ENCODE measurements at regions of chr12 and their contacts with region 1.

Region 1: GRCh38 chr12:27305673-27306456 is 26.8 kb upstream of the BMAL2 start:
- DNase-seq: no peak
- H3K4me3 ChIP-seq: no peak overlapping the region
- CTCF ChIP-seq: peak; percentile 2

Region 2: DNA sequence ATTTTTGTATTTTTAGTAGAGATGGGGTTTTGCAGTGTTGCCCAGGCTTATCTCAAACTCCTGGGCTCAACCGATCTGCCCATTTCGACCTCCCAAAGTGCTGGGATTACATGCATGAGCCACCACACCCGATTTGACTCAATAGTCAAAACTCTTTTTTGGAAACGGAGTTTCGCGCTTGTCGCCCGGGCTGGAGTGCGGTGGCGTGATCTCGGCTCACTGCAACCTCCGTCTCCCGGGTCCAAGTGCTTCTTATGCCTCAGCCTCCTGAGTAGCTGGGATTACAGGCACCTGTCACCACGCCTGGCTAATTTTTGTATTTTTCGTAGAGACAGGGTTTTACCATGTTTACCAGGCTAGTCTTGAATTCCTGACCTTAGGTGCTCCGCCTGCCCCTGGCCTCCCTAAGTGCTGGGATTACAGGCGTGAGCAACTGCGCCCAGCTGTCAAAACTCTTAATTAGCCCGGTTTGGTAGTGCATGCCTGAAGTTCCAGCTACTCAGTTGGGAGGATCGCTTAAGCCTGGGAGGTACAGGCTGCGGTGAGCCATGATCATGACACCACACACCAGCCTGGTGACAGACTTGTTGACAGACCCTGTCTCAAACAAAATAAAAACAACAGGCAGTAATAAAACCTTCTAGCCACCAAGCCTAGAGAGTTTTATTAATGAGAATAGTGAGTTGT is 271.1 kb before region 1 on chr12:
- CTCF ChIA-PET with region 1: interaction called, 68 read pairs
- POLR2A ChIA-PET with region 1: interaction called, 3 read pairs
- DNase-seq: no peak
- H3K4me3 ChIP-seq: no peak overlapping the region
- CTCF ChIP-seq: no peak

Region 3: GRCh38 chr12:27179400-27180214 is 126.3 kb before region 1 on chr12:
- CTCF ChIA-PET with region 1: interaction called, 10 read pairs
- POLR2A ChIA-PET with region 1: no interaction called
- DNase-seq: peak; percentile 97
- H3K4me3 ChIP-seq: no peak overlapping the region
- CTCF ChIP-seq: no peak

Region 4: DNA sequence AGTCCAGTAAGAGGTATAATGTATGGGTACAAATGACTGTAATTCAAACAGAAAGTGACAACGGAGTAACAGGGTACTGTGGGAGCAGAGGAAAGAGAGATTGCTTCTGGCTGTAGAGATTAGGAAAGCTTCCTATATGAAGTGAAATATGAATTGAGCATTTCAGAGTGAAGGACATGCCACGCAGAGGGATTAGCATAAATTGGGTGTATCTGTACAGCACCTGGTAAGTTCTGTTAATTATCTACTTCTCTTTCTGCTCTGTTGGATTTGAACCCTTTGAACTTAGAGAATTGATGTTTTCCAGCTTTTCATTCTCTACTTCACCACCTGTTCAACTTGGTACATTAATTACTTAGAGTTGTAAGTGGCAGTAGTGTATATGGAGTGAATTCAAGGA is 52.9 kb before region 1 on chr12:
- CTCF ChIA-PET with region 1: interaction called, 27 read pairs
- POLR2A ChIA-PET with region 1: no interaction called
- DNase-seq: no peak
- H3K4me3 ChIP-seq: no peak overlapping the region
- CTCF ChIP-seq: no peak

Region 5: GRCh38 chr12:27290501-27291168 is 15.2 kb before region 1 on chr12:
- CTCF ChIA-PET with region 1: interaction called, 45 read pairs
- POLR2A ChIA-PET with region 1: no interaction called
- DNase-seq: no peak
- H3K4me3 ChIP-seq: no peak overlapping the region
- CTCF ChIP-seq: no peak

Region 6: DNA sequence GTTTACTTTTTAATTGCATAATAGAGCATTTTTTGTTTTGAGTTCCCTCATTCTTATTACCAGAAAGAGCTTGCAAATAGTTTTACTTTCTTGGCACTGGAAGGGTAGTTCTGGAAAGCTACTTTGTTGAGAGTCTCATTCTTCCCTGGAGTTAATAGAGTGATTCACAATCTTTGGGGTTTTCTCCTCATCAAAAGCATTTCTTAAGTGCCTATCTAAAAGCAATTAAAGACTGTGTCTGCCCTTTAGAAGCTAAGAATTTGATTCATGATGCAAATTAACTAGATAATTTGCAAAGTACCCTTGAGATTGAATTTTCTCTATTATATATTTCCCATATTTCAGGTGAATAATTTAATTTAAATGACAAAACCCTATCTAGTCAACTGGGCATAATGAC is 18.7 kb after region 1 on chr12:
- CTCF ChIA-PET with region 1: interaction called, 22 read pairs
- POLR2A ChIA-PET with region 1: no interaction called
- DNase-seq: no peak
- H3K4me3 ChIP-seq: no peak overlapping the region
- CTCF ChIP-seq: no peak

Measured in AG04449 (cell line).